PC-3 (cell line): ENCODE measurements at regions of chr2 and their contacts with region 1.

Region 1: GRCh38 chr2:233288719-233289118 is 18.9 kb upstream of the SAG start:
- DNase-seq: no peak
- ATAC-seq: peak; percentile 42; the same call in 1 of the 2 replicates
- H3K4me3 ChIP-seq: no peak overlapping the region
- H3K27ac ChIP-seq: no peak overlapping the region
- H3K4me1 ChIP-seq: no peaks in the 10 kb centered on the region
- H3K27me3 ChIP-seq: no peaks in the 10 kb centered on the region
- CTCF ChIP-seq: no peak

Region 2: GRCh38 chr2:233350708-233351107 is 62.0 kb after region 1 on chr2:
- CTCF ChIA-PET with region 1: no interaction called
- POLR2A ChIA-PET with region 1: no interaction called
- intact Hi-C with region 1: loop called (anchors 1 kb)
- DNase-seq: peak; percentile 97
- ATAC-seq: peak; percentile 84
- H3K4me3 ChIP-seq: no peak overlapping the region
- H3K27ac ChIP-seq: peak overlapping the region; percentile 80
- H3K4me1 ChIP-seq: peaks cover 28% of the 10 kb centered on the region
- H3K27me3 ChIP-seq: no peaks in the 10 kb centered on the region
- CTCF ChIP-seq: no peak

Region 3: GRCh38 chr2:233418761-233419625 is 130.3 kb after region 1 on chr2:
- CTCF ChIA-PET with region 1: no interaction called
- POLR2A ChIA-PET with region 1: no interaction called
- intact Hi-C with region 1: loop called (anchors 10 kb)
- DNase-seq: peak; percentile 81
- ATAC-seq: peak; percentile 13
- H3K4me3 ChIP-seq: peak overlapping the region; percentile 63
- H3K27ac ChIP-seq: peak overlapping the region; percentile 96
- H3K4me1 ChIP-seq: peaks cover 94% of the 10 kb centered on the region
- H3K27me3 ChIP-seq: no peaks in the 10 kb centered on the region
- CTCF ChIP-seq: no peak